OCI-LY7 (cell line): ENCODE measurements at regions of chr5 and their contacts with region 1.

Region 1: GRCh38 chr5:56686337-56687195 is 128.8 kb upstream of the MAP3K1 start:
- DNase-seq: peak; percentile 90
- H3K4me3 ChIP-seq: peak overlapping the region; percentile 31
- H3K27ac ChIP-seq: peak overlapping the region; percentile 93
- H3K4me1 ChIP-seq: peaks cover 87% of the 10 kb centered on the region
- CTCF ChIP-seq: no peak

Region 2: GRCh38 chr5:56670118-56670483 is 16.5 kb before region 1 on chr5:
- CTCF ChIA-PET with region 1: interaction called, 4 read pairs
- POLR2A ChIA-PET with region 1: interaction called, 126 read pairs
- intact Hi-C with region 1: loop called (anchors 1 kb)
- DNase-seq: peak; percentile 98
- H3K4me3 ChIP-seq: peak overlapping the region; percentile 57
- H3K27ac ChIP-seq: peak overlapping the region; percentile 97
- H3K4me1 ChIP-seq: peaks cover 65% of the 10 kb centered on the region
- CTCF ChIP-seq: no peak

Region 3: GRCh38 chr5:56698463-56699381 is 12.2 kb after region 1 on chr5:
- CTCF ChIA-PET with region 1: no interaction called
- POLR2A ChIA-PET with region 1: interaction called, 30 read pairs
- intact Hi-C with region 1: no loop called
- DNase-seq: no peak
- H3K4me3 ChIP-seq: no peak overlapping the region
- H3K27ac ChIP-seq: no peak overlapping the region
- H3K4me1 ChIP-seq: peaks cover 38% of the 10 kb centered on the region
- CTCF ChIP-seq: no peak

Region 4: GRCh38 chr5:56755036-56755555 is 68.5 kb after region 1 on chr5:
- CTCF ChIA-PET with region 1: no interaction called
- POLR2A ChIA-PET with region 1: interaction called, 3 read pairs
- intact Hi-C with region 1: loop called (anchors 2 kb)
- DNase-seq: no peak
- H3K4me3 ChIP-seq: no peak overlapping the region
- H3K27ac ChIP-seq: no peak overlapping the region
- H3K4me1 ChIP-seq: peaks cover 39% of the 10 kb centered on the region
- CTCF ChIP-seq: no peak

Region 5: DNA sequence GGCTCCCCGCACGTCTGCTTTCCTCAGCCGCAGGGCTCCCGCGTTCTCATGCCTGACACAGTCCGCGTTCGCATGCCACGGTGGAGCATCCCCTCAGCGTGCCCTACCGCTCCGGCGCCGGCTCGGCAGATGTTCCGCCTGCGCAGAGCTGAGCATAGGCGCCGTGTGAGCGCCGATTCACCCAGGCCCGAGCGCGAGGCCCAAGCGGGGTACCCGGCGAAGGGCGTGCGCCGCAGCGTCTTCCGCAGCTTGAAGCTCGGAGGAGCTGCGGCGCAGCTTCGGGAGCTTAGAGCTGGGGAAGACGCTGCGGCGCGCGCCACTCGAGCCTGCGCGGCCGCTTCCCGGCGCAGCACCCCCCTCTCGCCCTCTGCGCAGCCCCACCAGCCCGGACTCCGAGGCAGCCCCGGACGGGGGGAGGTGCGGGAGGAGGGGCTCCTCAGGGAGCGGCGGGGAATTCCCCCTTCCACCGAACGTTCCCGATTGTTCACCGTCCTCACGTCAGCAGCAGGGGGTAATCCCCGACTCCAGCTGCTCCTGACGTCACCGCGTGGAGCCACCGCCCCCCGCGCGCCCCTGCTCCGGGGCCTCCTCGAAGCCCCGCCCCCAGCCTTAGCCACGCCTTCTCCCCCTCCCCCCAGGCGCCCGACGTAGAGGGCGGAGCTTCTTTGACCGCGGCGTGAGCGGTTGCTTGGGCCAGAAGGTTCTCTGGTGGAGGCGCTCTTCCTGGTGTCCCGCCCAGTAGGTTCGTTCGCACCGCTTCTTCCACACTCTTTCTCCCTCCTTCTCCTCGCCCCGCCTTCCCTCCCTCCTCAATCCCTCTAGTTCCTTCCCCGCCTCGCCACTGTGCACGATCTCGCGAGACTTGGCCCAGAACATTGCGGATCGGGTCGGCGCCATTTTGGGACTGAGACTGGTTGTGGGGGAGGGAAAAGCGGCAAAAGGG is 486.9 kb after region 1 on chr5 and contains the start of gene GPBP1:
- CTCF ChIA-PET with region 1: no interaction called
- POLR2A ChIA-PET with region 1: no interaction called
- intact Hi-C with region 1: loop called (anchors 10 kb)
- DNase-seq: peak; percentile 96
- H3K4me3 ChIP-seq: peak within 1 kb of the TSS; percentile 93
- H3K27ac ChIP-seq: peak within 1 kb of the TSS; percentile 93
- H3K4me1 ChIP-seq: peaks cover 11% of the 10 kb centered on the region
- CTCF ChIP-seq: peak; percentile 3; the same call in 1 of the 2 replicates
- total RNA-seq, gene GPBP1: 77.0 and 96.6 TPM in 2 replicates